Activated B cell treated with CpG ODN at 0.5 μM for 24 hours (primary cell): ENCODE measurements at regions of chr16 and their contacts with region 1.

Region 1: DNA sequence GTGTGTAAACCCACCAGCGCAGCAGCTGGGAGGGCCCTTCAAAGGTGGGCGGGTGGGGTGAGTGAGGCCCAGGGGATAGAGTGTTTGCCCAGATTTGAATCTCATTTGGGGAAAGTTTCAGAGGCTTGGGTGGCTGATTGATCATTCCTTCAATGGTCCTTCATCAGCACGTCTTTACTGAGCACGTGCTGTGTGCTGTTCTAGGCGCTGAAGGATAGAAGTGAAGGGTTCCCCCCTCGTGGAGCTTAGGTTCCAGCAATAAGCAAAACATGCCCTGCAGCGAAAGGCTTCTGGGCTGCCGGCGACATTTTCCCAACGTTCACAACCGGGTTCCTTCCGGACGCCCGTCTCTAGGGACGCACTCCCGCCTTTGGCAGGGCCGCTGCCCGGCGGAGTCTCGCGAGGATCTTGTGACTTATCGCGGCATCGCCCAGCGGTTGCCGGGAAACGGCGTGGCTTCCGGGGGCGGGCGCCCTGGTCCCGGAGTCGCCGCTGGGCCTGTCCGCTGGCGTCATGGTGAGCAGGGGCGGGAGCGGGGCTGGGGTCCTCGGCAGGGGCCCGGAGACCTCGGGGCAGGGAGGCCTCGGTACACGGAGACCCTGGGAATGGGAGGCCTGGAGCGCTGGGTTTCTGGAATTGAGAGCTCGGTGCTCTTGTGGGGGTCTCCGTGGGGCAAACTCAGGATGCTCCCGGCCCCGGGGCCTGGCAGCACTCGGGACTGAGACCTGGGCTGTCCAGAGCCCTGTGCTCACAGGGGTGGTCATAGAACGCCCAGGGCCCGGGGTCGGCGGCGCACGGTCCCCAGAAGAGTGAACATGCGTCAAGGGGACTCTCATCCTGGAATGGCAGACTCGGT is 3.2 kb upstream of the DBNDD1 start:
- DNase-seq: peak; percentile 68
- ATAC-seq: peak; percentile 73
- H3K4me3 Mint-ChIP-seq: peak overlapping the region; percentile 77
- H3K27ac Mint-ChIP-seq: no peak overlapping the region
- H3K4me1 Mint-ChIP-seq: peaks cover 32% of the 10 kb centered on the region
- H3K27me3 Mint-ChIP-seq: peaks cover 7% of the 10 kb centered on the region
- CTCF ChIP-seq: no peak

Region 2: DNA sequence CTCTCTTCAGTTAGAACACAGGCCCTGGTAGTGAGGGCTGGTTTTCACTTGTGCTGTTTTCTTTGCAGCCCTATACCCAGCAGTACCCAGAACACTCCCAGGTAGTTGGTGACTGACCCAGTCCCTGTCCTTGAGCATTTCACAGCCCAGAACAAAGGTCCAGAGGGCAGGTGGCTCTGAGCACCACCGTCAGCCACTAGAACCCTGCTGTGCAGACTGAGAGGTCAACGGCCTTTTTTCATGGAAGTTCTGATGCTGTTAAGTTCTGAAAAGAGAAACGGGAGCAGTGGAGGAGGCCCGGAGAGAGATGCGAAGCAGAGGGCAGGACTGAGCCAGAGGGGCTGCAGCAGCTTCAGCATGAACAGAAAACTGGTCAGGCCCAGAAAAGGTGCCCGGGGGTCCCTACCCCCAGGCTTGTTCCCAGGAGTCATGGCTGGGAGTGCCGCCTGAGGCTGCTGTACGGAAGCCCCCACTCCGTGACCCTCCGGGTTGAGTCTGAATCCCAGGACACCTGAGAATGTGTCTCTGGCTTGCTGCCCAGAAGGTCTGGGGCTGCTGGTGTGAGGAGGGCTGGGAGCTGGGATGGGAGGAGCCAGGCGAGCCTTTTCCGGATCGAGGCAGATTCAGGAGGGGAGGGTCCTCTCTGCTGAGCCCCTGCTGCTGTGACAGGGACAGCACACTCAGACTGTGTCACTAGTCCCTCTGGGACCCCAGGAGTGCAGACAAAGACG is 292.4 kb before region 1 on chr16:
- CTCF ChIA-PET with region 1: no interaction called
- POLR2A ChIA-PET with region 1: no interaction called
- intact Hi-C with region 1: no loop called
- DNase-seq: no peak
- ATAC-seq: no peak
- H3K4me3 Mint-ChIP-seq: no peak overlapping the region
- H3K27ac Mint-ChIP-seq: no peak overlapping the region
- H3K4me1 Mint-ChIP-seq: peaks cover 12% of the 10 kb centered on the region
- H3K27me3 Mint-ChIP-seq: no peaks in the 10 kb centered on the region
- CTCF ChIP-seq: no peak

Region 3: DNA sequence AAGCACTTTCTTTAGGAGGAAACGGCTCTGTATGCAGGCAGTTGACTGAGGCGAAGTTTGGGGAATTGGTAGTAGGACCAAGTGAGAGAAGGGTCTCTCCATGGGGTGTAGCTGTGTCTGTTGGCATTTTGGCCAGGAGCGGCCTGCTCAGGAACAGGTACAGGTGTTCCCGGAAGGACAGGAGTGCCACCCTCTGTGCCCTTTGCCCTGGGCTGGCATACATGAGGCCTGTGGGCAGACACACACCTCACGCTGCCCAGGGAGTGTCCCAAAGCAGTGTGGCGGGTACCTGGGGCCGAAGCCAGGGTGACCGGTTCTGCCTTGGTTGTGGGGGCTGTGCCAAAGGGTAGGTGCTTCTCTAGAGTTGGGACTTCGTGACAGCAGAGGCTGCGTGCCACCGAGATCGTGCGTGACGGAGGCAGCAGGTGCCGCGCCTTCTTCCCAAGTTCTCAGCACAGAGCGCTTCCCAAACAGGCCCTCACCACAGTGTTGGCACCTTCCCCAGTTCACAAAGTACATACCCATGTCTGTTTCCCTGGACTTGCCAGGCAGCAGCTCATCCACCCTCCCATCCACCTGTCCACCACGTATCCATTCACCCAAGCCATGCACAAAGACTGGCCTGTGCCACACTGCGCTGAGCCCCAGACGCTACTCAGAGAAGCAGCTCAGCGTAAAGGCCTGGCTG is 169.0 kb before region 1 on chr16:
- CTCF ChIA-PET with region 1: no interaction called
- POLR2A ChIA-PET with region 1: no interaction called
- intact Hi-C with region 1: no loop called
- DNase-seq: no peak
- ATAC-seq: no peak
- H3K4me3 Mint-ChIP-seq: no peak overlapping the region
- H3K27ac Mint-ChIP-seq: no peak overlapping the region
- H3K4me1 Mint-ChIP-seq: no peaks in the 10 kb centered on the region
- H3K27me3 Mint-ChIP-seq: peaks cover 2% of the 10 kb centered on the region
- CTCF ChIP-seq: no peak

Region 4: DNA sequence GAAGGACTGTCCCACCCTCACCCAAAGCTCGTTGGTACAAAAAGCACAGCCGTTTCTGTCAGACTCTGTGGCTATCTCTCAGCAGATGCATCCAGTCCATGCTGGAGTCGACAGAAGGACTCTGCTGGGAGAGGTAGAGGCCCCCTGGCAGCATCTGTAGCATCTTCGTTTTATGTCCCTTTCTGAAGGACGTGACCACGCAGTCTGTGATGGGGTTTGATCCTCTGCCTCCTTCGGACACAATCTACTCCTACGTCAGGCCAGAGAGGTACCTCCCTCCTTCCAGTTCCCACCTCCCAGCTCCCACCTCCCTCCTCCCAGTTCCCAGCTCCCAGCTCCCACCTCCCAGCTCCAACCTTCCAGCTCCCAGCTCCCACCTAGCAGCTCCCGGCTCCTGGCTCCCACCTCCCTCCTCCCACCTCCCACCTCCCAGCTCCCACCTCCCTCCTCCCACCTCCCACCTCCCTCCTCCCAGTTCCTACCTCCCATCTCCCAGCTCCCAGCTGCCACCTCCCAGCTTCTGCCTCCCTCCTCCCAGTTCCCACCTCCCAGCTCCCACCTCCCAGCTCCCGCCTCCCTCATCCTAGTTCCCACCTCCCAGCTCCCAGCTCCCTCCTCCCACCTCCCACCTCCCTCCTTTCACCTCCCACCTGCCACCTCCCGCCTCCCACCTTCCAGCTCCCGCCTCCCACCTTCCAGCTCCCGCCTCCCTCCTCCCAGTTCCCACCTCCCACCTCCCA is 115.2 kb before region 1 on chr16:
- CTCF ChIA-PET with region 1: no interaction called
- POLR2A ChIA-PET with region 1: no interaction called
- intact Hi-C with region 1: no loop called
- DNase-seq: no peak
- ATAC-seq: no peak
- H3K4me3 Mint-ChIP-seq: no peak overlapping the region
- H3K27ac Mint-ChIP-seq: no peak overlapping the region
- H3K4me1 Mint-ChIP-seq: peaks cover 5% of the 10 kb centered on the region
- H3K27me3 Mint-ChIP-seq: no peaks in the 10 kb centered on the region
- CTCF ChIP-seq: no peak

Region 5: DNA sequence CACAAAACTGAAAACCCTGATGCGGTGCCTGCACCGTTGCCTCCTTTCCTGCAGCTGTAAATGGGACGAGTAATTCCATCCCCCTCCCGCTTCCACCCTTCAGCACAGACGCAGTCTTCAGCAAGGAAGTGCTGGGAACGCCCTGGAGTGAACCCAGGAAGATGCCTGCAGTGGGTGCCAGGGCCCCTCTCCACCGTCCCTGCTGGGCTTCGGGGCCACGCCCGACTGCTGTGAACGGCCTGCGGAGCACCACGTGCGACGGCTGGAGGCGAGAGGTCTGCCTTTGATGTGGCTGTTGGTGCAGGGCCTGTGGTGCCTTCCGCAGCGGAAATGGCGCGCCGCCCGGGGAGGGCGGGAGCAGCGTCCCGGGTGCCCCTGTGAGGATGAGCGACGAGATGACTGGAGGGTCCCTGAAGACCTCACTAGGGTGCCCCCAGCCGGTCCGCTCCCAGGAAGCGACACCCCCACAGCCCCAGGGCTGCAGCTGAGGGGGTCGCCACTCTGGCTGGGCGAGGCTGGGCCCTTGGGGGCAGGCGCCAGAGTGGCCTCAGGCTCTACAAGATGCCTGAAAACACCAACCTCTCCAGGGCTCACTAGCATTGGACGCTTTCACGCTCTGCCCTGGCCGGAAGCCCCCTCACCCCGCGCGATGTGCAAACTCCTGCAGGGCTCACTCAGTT is 104.5 kb before region 1 on chr16:
- CTCF ChIA-PET with region 1: no interaction called
- POLR2A ChIA-PET with region 1: no interaction called
- intact Hi-C with region 1: loop called (anchors 2 kb)
- DNase-seq: peak; percentile 61
- ATAC-seq: peak; percentile 80
- H3K4me3 Mint-ChIP-seq: peak overlapping the region; percentile 66
- H3K27ac Mint-ChIP-seq: no peak overlapping the region
- H3K4me1 Mint-ChIP-seq: peaks cover 28% of the 10 kb centered on the region
- H3K27me3 Mint-ChIP-seq: peaks cover 17% of the 10 kb centered on the region
- CTCF ChIP-seq: no peak

Region 6: GRCh38 chr16:89945670-89946069 is 76.8 kb before region 1 on chr16:
- CTCF ChIA-PET with region 1: no interaction called
- POLR2A ChIA-PET with region 1: no interaction called
- intact Hi-C with region 1: no loop called
- DNase-seq: no peak
- ATAC-seq: no peak
- H3K4me3 Mint-ChIP-seq: no peak overlapping the region
- H3K27ac Mint-ChIP-seq: no peak overlapping the region
- H3K4me1 Mint-ChIP-seq: peaks cover 46% of the 10 kb centered on the region
- H3K27me3 Mint-ChIP-seq: peaks cover 8% of the 10 kb centered on the region
- CTCF ChIP-seq: no peak